ENCODE measurements at regions of chr3 and their contacts with region 1.

Region 1: GRCh38 chr3:100068826-100069225 is 45.5 kb downstream of the FILIP1L start:
- DNase-seq: peak; percentile 91
- H3K4me3 Mint-ChIP-seq: no peak overlapping the region
- H3K27ac Mint-ChIP-seq: peak overlapping the region; percentile 15
- H3K4me1 Mint-ChIP-seq: peaks cover 46% of the 10 kb centered on the region
- H3K27me3 Mint-ChIP-seq: no peaks in the 10 kb centered on the region

Region 2: DNA sequence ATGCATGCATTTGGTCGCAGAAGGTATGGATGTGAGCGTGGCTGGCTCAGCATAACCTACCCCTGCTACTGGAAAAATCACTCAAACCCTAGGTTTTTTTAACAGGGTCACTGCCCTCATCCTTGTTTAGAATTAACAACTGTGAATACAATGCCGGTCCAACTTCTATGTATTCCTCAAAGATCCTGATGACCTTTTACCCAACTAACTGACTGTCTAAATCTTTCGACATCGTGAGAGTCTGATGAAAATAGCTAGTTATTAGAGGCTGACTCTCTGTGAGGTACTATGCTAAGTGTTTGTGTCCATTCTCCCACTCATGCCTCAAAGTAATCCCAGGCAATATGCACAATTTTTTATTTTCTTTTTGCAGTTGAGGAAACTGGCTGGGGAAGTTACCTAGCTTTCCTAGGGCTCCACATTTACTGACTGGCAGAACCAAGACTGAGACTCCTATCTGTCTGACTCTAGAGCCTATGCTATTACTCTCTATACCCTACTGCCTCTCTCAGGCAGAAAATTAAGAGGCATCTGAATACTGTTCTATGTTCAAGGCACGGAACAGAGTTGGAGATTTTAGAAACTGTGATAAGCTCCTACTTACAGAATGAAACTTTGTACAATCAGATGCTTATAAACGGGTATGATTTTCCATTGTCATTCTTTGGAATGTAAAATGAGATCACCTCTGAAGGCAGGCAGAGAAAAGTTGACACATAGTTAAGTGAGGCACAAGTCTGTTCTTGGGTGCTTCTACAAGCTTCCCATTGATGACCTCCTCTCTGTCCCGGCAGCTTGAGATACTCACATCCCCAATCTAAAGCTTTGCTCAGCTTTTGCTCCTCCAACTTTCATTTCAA is 10.9 kb before region 1 on chr3:
- CTCF ChIA-PET with region 1: interaction called, 12 read pairs
- POLR2A ChIA-PET with region 1: no interaction called
- DNase-seq: no peak
- H3K4me3 Mint-ChIP-seq: no peak overlapping the region
- H3K27ac Mint-ChIP-seq: no peak overlapping the region
- H3K4me1 Mint-ChIP-seq: peaks cover 11% of the 10 kb centered on the region
- H3K27me3 Mint-ChIP-seq: no peaks in the 10 kb centered on the region

Region 3: GRCh38 chr3:100254168-100254777 is 185.4 kb after region 1 on chr3:
- CTCF ChIA-PET with region 1: interaction called, 13 read pairs
- POLR2A ChIA-PET with region 1: interaction called, 3 read pairs
- DNase-seq: peak; percentile 64
- H3K4me3 Mint-ChIP-seq: no peak overlapping the region
- H3K27ac Mint-ChIP-seq: no peak overlapping the region
- H3K4me1 Mint-ChIP-seq: peaks cover 6% of the 10 kb centered on the region
- H3K27me3 Mint-ChIP-seq: no peaks in the 10 kb centered on the region